ENCODE measurements at regions of chr20 and their contacts with region 1.

Region 1: GRCh38 chr20:59439243-59439642 is 138.8 kb downstream of the EDN3 start:
- DNase-seq: no peak
- H3K4me3 ChIP-seq: no peak overlapping the region
- H3K27ac ChIP-seq: no peak overlapping the region
- H3K4me1 ChIP-seq: peaks cover 50% of the 10 kb centered on the region
- H3K27me3 ChIP-seq: no peaks in the 10 kb centered on the region
- CTCF ChIP-seq: no peak

Region 2: DNA sequence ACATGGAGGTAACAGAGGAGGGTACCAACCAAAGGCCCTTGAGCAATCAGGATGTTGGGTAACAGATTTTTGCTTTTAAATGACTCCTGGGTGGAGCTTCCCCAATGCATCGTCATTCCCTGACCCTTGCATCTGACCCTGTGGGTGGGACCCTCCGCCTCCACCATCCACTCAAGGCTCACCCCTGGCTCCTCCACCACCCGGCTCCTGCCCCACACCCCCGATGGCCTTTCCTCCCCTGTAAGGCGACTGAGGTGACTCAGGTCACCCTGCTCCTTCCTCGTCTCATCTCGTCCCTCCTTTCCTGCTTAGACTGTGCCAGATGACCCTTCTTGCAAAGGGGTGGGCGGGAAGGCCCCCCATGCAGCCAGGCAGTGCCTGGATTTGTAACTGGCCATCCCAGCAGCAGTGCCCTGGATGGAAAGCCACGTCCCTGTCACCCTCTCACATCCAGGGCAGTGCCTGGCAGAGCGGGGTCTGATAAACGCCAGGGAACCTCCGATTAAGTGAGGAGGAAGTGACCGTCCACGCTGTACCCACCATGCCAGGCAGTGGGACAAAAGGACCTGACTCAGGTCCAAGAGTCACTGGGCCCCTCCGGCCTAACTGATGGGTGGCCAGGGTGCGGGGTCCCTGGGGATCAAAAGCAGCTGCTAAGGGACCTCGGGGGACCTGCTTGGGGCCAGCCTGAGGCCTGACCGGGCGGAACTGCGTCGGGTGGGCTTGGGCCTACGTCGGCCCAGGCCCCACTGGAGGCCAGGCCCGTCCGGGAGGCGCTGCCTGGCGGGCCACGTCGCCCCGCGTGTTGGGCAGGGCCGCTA is 747.3 kb before region 1 on chr20:
- CTCF ChIA-PET with region 1: no interaction called
- POLR2A ChIA-PET with region 1: interaction called, 20 read pairs
- intact Hi-C with region 1: no loop called
- DNase-seq: no peak
- H3K4me3 ChIP-seq: no peak overlapping the region
- H3K27ac ChIP-seq: no peak overlapping the region
- H3K4me1 ChIP-seq: no peaks in the 10 kb centered on the region
- H3K27me3 ChIP-seq: no peaks in the 10 kb centered on the region
- CTCF ChIP-seq: no peak

Region 3: GRCh38 chr20:58755062-58755697 is 684.1 kb before region 1 on chr20:
- CTCF ChIA-PET with region 1: no interaction called
- POLR2A ChIA-PET with region 1: interaction called, 21 read pairs
- intact Hi-C with region 1: no loop called
- DNase-seq: no peak
- H3K4me3 ChIP-seq: no peak overlapping the region
- H3K27ac ChIP-seq: no peak overlapping the region
- H3K4me1 ChIP-seq: no peaks in the 10 kb centered on the region
- H3K27me3 ChIP-seq: peaks cover 25% of the 10 kb centered on the region
- CTCF ChIP-seq: no peak